ENCODE measurements at regions of chr9 and their contacts with region 1.

Region 1: GRCh38 chr9:70504834-70505233 is 90.4 kb upstream of the KLF9 start:
- DNase-seq: no peak

Region 2: GRCh38 chr9:70093944-70094343 is 410.9 kb before region 1 on chr9:
- intact Hi-C with region 1: no loop called
- DNase-seq: no peak

Region 3: DNA sequence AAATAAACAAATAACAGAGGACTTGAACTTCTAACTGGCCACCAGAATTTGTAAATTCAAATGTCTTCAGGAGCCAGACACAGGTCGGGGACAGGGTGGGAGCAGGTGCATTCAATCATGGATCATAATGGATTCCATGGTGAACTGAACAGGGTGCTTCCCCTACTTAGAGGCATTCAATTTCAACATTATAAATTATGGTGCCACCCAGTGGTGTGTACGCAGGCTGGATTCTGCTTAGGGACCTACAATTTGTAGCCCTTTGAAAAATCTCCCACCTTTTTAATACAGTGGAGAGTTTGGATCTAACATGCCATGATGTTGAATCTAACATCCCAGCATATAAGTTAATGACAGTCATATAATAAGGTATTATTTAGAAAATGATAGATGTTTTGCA is 112.6 kb before region 1 on chr9:
- intact Hi-C with region 1: no loop called
- DNase-seq: no peak

Region 4: GRCh38 chr9:70578720-70579119 is 73.9 kb after region 1 on chr9:
- intact Hi-C with region 1: loop called (anchors 5 kb)
- DNase-seq: no peak

Measured in cardiac septum (tissue), 1 donor.